ENCODE measurements at regions of chr12 and their contacts with region 1.

Region 1: DNA sequence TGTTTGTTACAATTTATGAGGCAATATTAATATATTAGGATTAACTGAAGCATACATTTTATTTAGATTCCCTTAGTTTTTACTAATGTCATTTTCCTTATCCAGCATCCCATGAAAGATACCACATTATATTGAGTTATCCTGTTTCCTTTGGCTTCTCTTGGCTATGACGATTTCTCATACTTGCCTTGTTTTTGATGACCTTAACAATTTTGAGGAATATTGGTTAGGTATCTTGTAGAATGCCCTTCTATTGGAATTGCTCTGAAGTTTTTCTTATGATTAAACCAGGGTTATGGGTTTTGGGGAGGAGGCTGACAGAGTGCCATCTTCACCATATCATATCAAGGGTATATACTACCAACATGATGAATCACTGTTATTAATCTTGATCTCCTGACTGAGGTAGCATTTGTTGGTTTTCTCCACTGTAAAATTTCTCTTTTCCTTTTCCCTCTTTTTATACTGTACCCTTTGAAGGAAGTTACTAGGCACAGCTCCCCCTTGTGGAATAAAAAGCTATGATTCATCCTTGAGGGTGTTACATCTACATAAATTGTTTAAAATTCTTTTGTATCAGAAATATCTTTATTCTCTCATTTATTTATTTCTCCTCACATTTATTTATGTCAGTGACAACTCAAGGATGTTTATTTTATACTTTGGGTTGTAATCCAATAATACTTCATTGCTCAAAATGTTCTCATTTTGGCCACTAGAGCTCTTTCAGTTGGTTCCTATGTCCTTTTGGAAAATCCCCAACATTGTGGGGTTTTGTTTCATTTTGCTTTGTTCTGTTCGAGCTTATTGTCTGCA is 239.0 kb downstream of the SLC16A7 start:
- DNase-seq: peak; percentile 7
- ATAC-seq: no peak
- H3K4me3 Mint-ChIP-seq: no peak overlapping the region
- H3K27ac Mint-ChIP-seq: no peak overlapping the region
- H3K4me1 Mint-ChIP-seq: no peaks in the 10 kb centered on the region
- H3K27me3 Mint-ChIP-seq: peaks cover 8% of the 10 kb centered on the region
- CTCF ChIP-seq: peak; percentile 81

Region 2: GRCh38 chr12:59444932-59445331 is 389.9 kb before region 1 on chr12:
- CTCF ChIA-PET with region 1: interaction called, 12 read pairs
- POLR2A ChIA-PET with region 1: no interaction called
- intact Hi-C with region 1: no loop called
- DNase-seq: peak; percentile 31
- ATAC-seq: no peak
- H3K4me3 Mint-ChIP-seq: no peak overlapping the region
- H3K27ac Mint-ChIP-seq: no peak overlapping the region
- H3K4me1 Mint-ChIP-seq: no peaks in the 10 kb centered on the region
- H3K27me3 Mint-ChIP-seq: no peaks in the 10 kb centered on the region
- CTCF ChIP-seq: no peak

Region 3: DNA sequence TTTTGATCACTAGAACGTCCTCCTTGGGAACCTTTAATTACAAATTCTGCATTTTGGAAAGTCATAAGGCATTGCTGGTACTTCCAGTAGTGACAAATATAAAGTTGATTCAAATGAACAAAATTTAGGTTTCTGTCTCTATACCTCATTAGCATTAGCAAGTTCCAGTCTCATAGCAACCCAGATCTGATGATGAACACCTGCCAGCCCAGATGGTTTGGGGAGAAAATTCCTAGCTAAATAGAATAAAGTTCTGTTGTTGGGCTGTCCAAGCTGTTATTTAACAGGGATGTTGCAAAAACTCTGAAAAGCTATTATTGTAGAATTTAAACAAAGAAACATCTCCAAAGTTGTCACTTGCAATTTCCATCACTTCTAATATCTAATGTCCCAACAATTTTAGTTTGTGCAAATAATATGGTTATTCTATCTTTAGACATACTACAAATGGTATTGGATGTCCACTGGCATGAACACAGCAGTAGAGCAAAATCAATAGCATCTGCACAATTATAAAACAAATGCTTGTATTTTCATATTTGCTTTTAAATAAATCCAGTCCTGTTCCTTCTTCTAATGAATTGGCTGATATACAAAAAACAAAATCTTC is 60.4 kb after region 1 on chr12:
- CTCF ChIA-PET with region 1: no interaction called
- POLR2A ChIA-PET with region 1: no interaction called
- intact Hi-C with region 1: no loop called
- DNase-seq: no peak
- ATAC-seq: no peak
- H3K4me3 Mint-ChIP-seq: no peak overlapping the region
- H3K27ac Mint-ChIP-seq: no peak overlapping the region
- H3K4me1 Mint-ChIP-seq: no peaks in the 10 kb centered on the region
- H3K27me3 Mint-ChIP-seq: no peaks in the 10 kb centered on the region
- CTCF ChIP-seq: no peak

Measured in activated CD8-positive, alpha-beta T cell treated with anti-CD3 and anti-CD28 coated beads for 36 hours (primary cell).